Cardiac septum (tissue), 1 donor: ENCODE measurements at regions of chr9 and their contacts with region 1.

Region 1: DNA sequence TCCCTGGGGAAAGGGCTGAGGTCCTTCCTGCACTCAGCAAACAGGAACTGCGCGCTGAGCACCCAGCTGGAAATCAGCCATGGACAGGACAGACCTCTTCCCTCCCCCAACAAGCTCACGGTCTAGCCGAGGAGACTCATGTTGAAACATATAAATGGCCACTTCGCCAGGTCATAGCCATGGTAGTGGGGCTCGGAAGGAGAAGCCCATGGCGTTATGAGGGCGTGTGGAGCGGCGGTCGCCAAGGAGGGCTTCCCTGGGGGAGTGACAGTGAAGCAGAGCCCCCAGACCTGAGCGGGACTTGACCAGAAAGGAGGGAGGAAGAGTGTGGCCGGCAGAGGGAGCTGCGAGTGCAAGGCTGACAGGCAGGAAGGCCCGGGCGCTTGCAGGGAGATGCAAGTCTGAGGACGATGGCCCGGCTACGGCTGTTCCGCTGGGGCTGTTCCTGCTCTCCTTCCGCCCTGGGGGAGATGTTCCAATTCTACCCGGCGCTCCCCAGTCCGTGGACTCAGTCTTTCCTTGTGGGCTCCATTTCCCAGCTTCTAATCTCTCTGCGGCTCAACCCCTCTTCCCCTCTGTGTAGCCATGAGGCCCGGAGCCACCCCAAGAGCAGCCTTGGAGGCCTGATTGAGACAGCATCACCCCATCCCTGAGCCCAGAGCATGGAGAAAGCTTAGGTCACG is 43.9 kb upstream of the PRRC2B start:
- DNase-seq: peak; percentile 94

Region 2: GRCh38 chr9:131478421-131478868 is 128.4 kb after region 1 on chr9:
- intact Hi-C with region 1: loop called (anchors 5 kb)
- DNase-seq: peak; percentile 75

Region 3: GRCh38 chr9:131747356-131747755 is 397.3 kb after region 1 on chr9:
- intact Hi-C with region 1: loop called (anchors 5 kb)
- DNase-seq: no peak